ENCODE measurements at regions of chr4 and their contacts with region 1.

Region 1: GRCh38 chr4:2867758-2868491 is 24.3 kb downstream of the ADD1 start:
- DNase-seq: no peak
- H3K4me3 ChIP-seq: no peak overlapping the region
- CTCF ChIP-seq: no peak

Region 2: DNA sequence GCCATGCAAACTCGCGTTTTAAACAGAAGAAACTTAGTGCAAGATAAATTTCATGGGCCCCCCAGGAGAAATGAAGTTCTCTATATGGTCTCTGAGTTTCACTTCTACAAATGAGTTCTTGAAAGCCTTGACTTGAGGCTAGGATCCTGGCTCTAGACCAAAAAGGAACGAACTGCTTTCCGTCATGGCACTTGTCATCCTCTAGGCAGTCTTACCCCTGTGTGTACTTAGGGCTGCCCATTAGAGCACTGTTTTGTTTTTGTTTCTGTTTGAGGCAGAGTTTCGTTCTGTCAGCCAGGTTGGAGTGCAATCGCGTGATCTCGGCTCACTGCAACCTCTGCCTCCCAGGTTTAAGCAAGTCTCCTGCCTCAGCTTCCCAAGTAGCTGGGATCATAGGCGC is 370.0 kb before region 1 on chr4:
- in situ Hi-C with region 1: no loop called
- DNase-seq: no peak
- H3K4me3 ChIP-seq: no peak overlapping the region
- CTCF ChIP-seq: no peak

Region 3: DNA sequence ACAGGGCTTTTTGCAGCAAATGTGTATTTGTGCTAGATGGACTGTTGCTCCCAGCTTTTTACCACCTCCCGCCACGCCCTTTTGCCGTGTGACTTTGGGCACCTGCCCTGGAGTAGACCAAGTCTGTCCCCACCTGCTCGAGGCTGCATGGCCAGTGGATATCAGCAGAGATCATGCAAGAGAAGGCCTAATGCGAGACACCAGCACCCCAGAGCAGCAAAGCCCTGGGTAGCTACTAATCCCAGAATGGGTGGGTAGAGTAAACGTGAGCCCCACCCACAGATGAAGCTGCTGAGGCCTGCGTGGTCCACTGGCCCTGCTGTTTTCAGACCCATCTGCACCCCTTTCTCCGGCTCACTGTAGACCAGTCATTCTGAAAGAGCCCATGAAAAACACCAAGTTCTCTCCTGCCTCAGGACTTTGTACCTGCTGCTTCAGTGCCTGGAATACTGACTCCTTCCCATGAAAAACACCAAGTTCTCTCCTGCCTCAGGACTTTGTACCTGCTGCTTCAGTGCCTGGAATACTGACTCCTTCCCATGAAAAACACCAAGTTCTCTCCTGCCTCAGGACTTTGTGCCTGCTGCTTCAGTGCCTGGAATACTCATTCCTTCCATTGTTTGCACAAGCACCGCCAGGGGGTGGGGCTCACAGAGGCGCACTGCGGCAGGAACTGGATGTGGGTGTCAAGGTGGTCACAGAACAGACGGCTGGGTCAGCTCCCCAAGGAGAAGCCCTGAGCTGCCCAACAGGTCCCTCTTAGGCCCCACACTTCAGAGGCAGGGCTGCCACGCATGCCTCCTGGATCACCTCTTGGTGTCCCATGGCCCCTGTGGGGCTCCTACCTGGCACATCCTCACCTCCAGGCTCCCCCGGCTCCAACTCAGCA is 106.6 kb before region 1 on chr4:
- in situ Hi-C with region 1: loop called (anchors 5 kb)
- DNase-seq: no peak
- H3K4me3 ChIP-seq: no peak overlapping the region
- CTCF ChIP-seq: no peak

Region 4: GRCh38 chr4:2910409-2910808 is 42.5 kb after region 1 on chr4:
- in situ Hi-C with region 1: no loop called
- DNase-seq: no peak
- H3K4me3 ChIP-seq: no peak overlapping the region
- CTCF ChIP-seq: peak; percentile 1

Region 5: GRCh38 chr4:2934813-2935761 is 67.2 kb after region 1 on chr4:
- in situ Hi-C with region 1: no loop called
- DNase-seq: peak; percentile 54
- H3K4me3 ChIP-seq: peak overlapping the region; percentile 91
- CTCF ChIP-seq: no peak

Region 6: GRCh38 chr4:2948895-2949765 is 81.2 kb after region 1 on chr4:
- in situ Hi-C with region 1: no loop called
- DNase-seq: no peak
- H3K4me3 ChIP-seq: no peak overlapping the region
- CTCF ChIP-seq: peak; percentile 58

Measured in astrocyte of the cerebellum (primary cell).